ENCODE measurements at regions of chr11 and their contacts with region 1.

Region 1: DNA sequence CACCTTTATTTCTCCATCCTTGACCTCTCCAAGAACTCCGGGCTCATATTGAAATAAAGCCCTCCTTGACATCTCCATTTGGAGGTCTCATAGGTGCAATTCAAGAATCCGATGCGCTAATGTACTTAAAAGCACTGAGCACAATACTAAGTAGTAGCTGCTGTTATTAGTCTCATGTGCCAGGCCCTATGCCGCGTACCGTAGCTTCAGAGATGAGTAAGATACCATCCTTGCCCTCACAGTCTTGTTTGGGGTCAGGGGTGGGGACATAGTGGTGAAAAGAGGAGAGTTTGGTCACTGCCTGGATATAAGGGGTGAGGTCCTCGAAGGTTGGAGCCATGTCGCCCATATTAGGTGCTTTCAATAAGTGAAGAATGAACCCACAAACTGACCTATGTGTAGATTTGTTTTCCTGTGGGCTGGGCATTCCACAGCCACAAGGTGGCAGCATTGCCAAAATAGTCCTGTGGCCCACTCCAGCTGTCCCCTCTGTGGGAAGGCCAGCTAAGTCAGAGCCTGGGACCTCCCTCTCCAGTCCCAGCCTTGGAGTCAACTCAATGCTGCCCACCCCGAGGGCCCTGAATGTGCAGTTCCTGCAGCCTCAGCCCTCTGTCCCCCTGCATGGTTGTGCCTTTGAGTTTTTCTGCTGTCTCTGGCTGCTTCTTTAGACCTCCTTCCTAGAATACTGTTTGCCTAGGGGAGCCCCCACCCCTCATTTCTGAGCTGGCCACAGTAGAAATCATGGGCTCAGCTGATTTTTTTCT is 6.5 kb downstream of the DCPS start:
- DNase-seq: peak; percentile 74 to 79
- ATAC-seq: peak; percentile 91 to 95 (median 92)
- H3K4me3 ChIP-seq: no peak overlapping the region
- H3K27ac ChIP-seq: peak overlapping the region in 3 of 10 donors; percentile 3 to 71 (median 27)
- H3K4me1 ChIP-seq: peaks cover 0 to 40% (median 7%) of the 10 kb centered on the region in 9 donors
- H3K27me3 ChIP-seq: no peaks in the 10 kb centered on the region
- CTCF ChIP-seq: peak; percentile 83 to 97 (median 90)

Region 2: GRCh38 chr11:126332131-126332711 is 21.8 kb after region 1 on chr11:
- intact Hi-C with region 1: no loop called
- DNase-seq: peak; percentile 54 to 80
- ATAC-seq: peak in 7 of 8 donors; percentile 60 to 86 (median 72)
- H3K4me3 ChIP-seq: no peak overlapping the region
- H3K27ac ChIP-seq: peak overlapping the region in 4 of 10 donors; percentile 33 to 67 (median 46)
- H3K4me1 ChIP-seq: peaks cover 10 to 44% (median 39%) of the 10 kb centered on the region in 9 donors
- H3K27me3 ChIP-seq: no peaks in the 10 kb centered on the region
- CTCF ChIP-seq: no peak

Region 3: GRCh38 chr11:126355324-126355925 is 45.0 kb after region 1 on chr11 and contains the start of gene ST3GAL4:
- intact Hi-C with region 1: loop called in 5 of 10 experiments (anchors 2 to 5 kb)
- DNase-seq: peak; percentile 87 to 91
- ATAC-seq: peak; percentile 76 to 88 (median 84)
- H3K4me3 ChIP-seq: peak within 1 kb of the TSS; percentile 36 to 97 (median 74)
- H3K27ac ChIP-seq: peak within 1 kb of the TSS; percentile 68 to 96 (median 88)
- H3K4me1 ChIP-seq: peaks cover 28 to 93% (median 89%) of the 10 kb centered on the region in 9 donors
- H3K27me3 ChIP-seq: no peaks in the 10 kb centered on the region
- CTCF ChIP-seq: no peak
- total RNA-seq, gene ST3GAL4: 24.8 to 51.0 (median 43.4) TPM

Region 4: DNA sequence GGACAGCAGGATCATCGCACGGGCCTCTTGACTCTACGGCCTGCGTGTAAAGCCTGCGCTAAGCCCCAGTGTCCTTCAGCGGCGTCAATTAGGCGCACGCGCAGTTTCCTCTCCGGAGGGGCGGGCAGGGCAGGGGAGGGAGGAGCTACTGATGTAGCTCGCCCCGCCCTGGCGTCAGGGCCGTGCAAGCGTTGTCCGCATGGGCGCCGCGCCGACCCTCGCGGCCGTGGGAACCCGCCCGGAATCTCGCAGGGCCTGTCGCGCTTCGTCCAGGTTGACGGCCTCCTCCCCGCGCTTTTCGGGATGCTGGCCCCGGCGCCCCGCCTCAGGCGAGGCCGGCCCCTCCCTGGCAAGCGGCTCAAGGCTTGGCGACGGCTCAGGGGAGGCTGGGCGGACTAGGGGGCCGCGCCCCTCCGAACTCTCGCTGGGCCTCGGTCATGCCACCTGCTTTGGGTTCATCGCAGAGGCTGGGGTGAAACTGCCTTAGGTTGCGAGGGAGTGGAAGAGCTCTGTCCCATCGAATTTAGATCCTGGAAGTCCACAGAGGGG is 106.2 kb after region 1 on chr11:
- intact Hi-C with region 1: loop called in 5 of 10 experiments (anchors 5 kb)
- DNase-seq: peak; percentile 92 to 95
- ATAC-seq: peak; percentile 85 to 91 (median 88)
- H3K4me3 ChIP-seq: peak overlapping the region in 9 of 10 donors; percentile 27 to 55 (median 52)
- H3K27ac ChIP-seq: peak overlapping the region; percentile 70 to 93 (median 85)
- H3K4me1 ChIP-seq: peaks cover 26 to 90% (median 64%) of the 10 kb centered on the region in 9 donors
- H3K27me3 ChIP-seq: no peaks in the 10 kb centered on the region
- CTCF ChIP-seq: peak in 1 of 9 donors; percentile 8

Region 5: DNA sequence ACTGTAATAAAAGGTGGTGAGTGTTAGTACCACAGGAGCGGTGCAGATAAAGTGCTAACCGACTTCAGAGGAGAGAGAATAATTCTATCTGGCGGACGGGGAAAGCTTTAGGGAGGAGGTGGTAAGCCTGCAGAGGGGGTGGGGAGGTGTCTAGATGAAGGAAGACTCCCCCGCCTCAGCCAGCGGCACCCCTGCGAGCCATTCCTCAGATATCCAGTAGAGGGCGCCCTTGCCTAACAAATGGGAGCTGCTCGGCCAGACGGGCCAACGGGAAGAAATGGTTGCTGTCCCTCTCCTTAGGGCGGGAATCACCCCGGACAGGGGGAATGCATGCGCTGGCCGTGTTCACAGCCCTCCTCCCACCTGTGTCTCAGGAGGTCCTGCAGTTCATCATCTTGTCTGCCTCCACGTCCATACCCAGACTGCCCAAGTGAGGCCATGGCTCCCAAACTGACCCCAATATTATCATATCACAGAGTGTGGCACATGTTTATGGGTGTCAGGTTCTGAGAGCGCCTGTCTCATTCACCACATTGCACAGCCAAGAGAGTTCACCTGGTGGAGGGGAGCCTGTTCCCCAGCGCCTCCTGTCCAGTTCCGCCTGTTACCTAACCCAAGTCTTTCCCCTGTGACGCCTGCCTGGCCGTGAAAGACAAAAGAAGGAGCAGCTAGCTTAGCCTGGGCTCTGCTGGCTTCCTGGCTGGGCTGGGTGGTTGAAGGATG is 130.5 kb after region 1 on chr11:
- intact Hi-C with region 1: loop called in 6 of 10 experiments (anchors 1 to 10 kb)
- DNase-seq: peak; percentile 73 to 80
- ATAC-seq: peak; percentile 29 to 77 (median 72)
- H3K4me3 ChIP-seq: no peak overlapping the region
- H3K27ac ChIP-seq: no peak overlapping the region
- H3K4me1 ChIP-seq: peaks cover 4 to 32% (median 16%) of the 10 kb centered on the region in 9 donors
- H3K27me3 ChIP-seq: peaks cover 0 to 8% (median 0%) of the 10 kb centered on the region in 7 donors
- CTCF ChIP-seq: peak; percentile 81 to 98 (median 96)

Region 6: GRCh38 chr11:126989942-126990715 is 679.7 kb after region 1 on chr11:
- intact Hi-C with region 1: loop called in 3 of 10 experiments (anchors 2 to 10 kb)
- DNase-seq: peak; percentile 65 to 68
- ATAC-seq: peak; percentile 73 to 88 (median 84)
- H3K4me3 ChIP-seq: no peak overlapping the region
- H3K27ac ChIP-seq: no peak overlapping the region
- H3K4me1 ChIP-seq: no peaks in the 10 kb centered on the region
- H3K27me3 ChIP-seq: peaks cover 5 to 77% (median 33%) of the 10 kb centered on the region in 7 donors
- CTCF ChIP-seq: peak; percentile 77 to 94 (median 91)